Posterior cingulate gyrus (tissue), 11 donors: ENCODE measurements at regions of chr2 and their contacts with region 1.

Region 1: GRCh38 chr2:63841254-63842022 is at the start of gene UGP2:
- DNase-seq: peak; percentile 54 to 95 (median 72)

Region 2: GRCh38 chr2:63424329-63425078 is 416.9 kb before region 1 on chr2:
- intact Hi-C with region 1: no loop called
- DNase-seq: peak in 1 of 10 donors; percentile 36

Region 3: DNA sequence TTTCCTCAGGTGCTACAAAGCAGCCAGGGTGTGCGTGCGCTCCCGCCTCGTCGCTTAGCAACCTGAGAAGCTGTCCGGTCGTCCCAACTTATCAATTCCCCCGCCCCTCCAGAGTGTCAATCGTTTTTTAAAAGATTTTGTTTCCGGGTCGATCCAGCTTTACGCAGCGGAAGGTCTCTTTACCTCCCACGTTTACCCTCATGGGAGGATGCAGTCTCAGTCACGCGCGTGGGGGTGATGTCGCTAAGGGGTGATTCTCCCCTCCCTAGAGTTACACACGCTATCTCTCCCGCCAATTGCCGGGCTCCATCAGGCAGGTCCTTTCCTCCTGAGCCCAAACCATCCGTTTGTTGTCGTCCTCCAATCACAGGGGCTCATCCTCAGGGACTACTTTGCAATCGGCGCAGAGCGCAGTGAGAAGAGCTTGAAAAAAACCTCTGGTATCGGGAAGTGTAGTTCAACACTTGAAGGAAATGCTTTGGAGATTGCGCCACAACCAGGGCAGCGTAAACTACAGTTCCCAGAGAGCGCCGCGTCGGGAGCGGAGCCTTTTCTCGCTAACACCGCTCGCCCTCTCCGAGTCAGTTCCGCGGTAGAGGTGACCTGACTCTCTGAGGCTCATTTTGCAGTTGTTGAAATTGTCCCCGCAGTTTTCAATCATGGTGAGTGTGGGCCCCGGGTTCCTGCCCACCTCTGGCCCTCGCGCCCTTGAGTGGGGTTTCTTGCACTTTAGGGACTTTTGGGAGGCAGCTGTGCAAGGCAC is 252.9 kb before region 1 on chr2 and contains the starts of genes MDH1 and WDPCP:
- intact Hi-C with region 1: loop called (anchors 5 kb)
- DNase-seq: peak; percentile 87 to 99 (median 94)

Region 4: DNA sequence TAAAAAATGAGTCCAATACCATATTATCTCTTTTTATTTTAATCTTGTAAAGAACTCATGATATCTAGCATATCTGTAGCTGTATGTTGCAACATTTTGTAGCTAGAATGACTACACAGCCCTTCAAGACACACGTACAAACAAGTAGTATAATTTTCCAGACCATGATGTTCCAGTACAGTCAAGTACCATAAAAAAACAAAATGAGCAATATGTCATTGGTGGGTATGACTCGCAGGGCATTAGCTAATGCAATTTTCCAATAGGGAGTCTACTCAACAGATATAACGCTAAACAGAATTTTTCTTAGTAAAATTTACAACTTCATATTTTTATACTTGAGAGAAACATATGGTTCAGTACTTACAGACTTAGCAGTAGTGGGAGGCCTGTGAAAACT is 53.4 kb before region 1 on chr2:
- intact Hi-C with region 1: no loop called
- DNase-seq: no peak

Region 5: GRCh38 chr2:64018923-64019718 is 177.7 kb after region 1 on chr2 and contains the start of gene VPS54:
- intact Hi-C with region 1: loop called (anchors 5 kb)
- DNase-seq: peak; percentile 55 to 95 (median 67)